ENCODE measurements at regions of chr9 and their contacts with region 1.

Region 1: GRCh38 chr9:18791074-18791473 is 241.9 kb downstream of the SAXO1 start:
- DNase-seq: no peak
- H3K4me3 ChIP-seq: no peak overlapping the region
- H3K27ac ChIP-seq: no peak overlapping the region
- H3K4me1 ChIP-seq: peaks cover 18% of the 10 kb centered on the region
- H3K27me3 ChIP-seq: no peaks in the 10 kb centered on the region
- CTCF ChIP-seq: peak; percentile 25 to 36
- POLR2A ChIP-seq: no peak

Region 2: GRCh38 chr9:18238254-18238653 is 552.8 kb before region 1 on chr9:
- CTCF ChIA-PET with region 1: no interaction called
- POLR2A ChIA-PET with region 1: no interaction called
- dilution Hi-C with region 1: no loop called
- intact Hi-C with region 1: loop called (anchors 2 kb)
- DNase-seq: peak; percentile 97
- H3K4me3 ChIP-seq: peak overlapping the region in 1 of 3 experiments; percentile 27
- H3K27ac ChIP-seq: peak overlapping the region; percentile 93
- H3K4me1 ChIP-seq: peaks cover 43% of the 10 kb centered on the region
- H3K27me3 ChIP-seq: no peaks in the 10 kb centered on the region
- CTCF ChIP-seq: no peak
- POLR2A ChIP-seq: no peak

Region 3: GRCh38 chr9:18776836-18777820 is 13.9 kb before region 1 on chr9:
- CTCF ChIA-PET with region 1: interaction called, 10 read pairs
- POLR2A ChIA-PET with region 1: no interaction called
- dilution Hi-C with region 1: no loop called
- intact Hi-C with region 1: no loop called
- DNase-seq: no peak
- H3K4me3 ChIP-seq: no peak overlapping the region
- H3K27ac ChIP-seq: no peak overlapping the region
- H3K4me1 ChIP-seq: peaks cover 19% of the 10 kb centered on the region
- H3K27me3 ChIP-seq: no peaks in the 10 kb centered on the region
- CTCF ChIP-seq: no peak
- POLR2A ChIP-seq: no peak

Measured in endothelial cell of umbilical vein (primary cell).